Heart right ventricle (tissue), 16 donors: ENCODE measurements at regions of chr10 and their contacts with region 1.

Region 1: DNA sequence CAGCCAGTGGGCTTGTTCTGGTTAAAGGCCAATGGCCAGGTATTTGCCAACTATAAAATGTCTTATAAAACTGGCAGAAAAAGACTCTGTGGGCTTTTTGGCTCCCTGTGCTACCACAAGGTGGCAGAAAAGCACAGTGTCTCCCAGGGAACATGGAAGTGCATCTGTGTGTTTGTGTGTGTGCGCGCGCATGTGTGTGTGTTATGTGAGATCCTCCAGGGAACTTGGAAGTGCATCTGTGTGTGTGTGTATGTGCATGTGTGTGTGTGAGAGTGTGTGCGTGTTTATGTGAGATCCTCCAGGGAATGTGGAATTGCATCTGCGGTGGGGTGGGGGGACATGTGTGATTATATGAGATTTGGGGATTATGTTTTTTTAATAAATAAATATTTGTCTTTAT is 30.2 kb upstream of the ABI1 start:
- DNase-seq: no peak
- ATAC-seq: no peak
- H3K4me3 ChIP-seq: no peak overlapping the region
- H3K27ac ChIP-seq: no peak overlapping the region
- H3K4me1 ChIP-seq: no peaks in the 10 kb centered on the region
- H3K27me3 ChIP-seq: peaks cover 0 to 6% (median 0%) of the 10 kb centered on the region in 7 donors
- CTCF ChIP-seq: peak in 6 of 9 donors; percentile 19 to 50 (median 25)

Region 2: GRCh38 chr10:26422977-26423376 is 468.0 kb before region 1 on chr10:
- intact Hi-C with region 1: no loop called
- DNase-seq: no peak
- ATAC-seq: no peak
- H3K4me3 ChIP-seq: no peak overlapping the region
- H3K27ac ChIP-seq: no peak overlapping the region
- H3K4me1 ChIP-seq: no peaks in the 10 kb centered on the region
- H3K27me3 ChIP-seq: no peaks in the 10 kb centered on the region
- CTCF ChIP-seq: no peak

Region 3: GRCh38 chr10:26946102-26946811 is 55.3 kb after region 1 on chr10:
- intact Hi-C with region 1: no loop called
- DNase-seq: no peak
- ATAC-seq: no peak
- H3K4me3 ChIP-seq: no peak overlapping the region
- H3K27ac ChIP-seq: no peak overlapping the region
- H3K4me1 ChIP-seq: no peaks in the 10 kb centered on the region
- H3K27me3 ChIP-seq: peaks cover 0 to 43% (median 18%) of the 10 kb centered on the region in 7 donors
- CTCF ChIP-seq: no peak

Region 4: DNA sequence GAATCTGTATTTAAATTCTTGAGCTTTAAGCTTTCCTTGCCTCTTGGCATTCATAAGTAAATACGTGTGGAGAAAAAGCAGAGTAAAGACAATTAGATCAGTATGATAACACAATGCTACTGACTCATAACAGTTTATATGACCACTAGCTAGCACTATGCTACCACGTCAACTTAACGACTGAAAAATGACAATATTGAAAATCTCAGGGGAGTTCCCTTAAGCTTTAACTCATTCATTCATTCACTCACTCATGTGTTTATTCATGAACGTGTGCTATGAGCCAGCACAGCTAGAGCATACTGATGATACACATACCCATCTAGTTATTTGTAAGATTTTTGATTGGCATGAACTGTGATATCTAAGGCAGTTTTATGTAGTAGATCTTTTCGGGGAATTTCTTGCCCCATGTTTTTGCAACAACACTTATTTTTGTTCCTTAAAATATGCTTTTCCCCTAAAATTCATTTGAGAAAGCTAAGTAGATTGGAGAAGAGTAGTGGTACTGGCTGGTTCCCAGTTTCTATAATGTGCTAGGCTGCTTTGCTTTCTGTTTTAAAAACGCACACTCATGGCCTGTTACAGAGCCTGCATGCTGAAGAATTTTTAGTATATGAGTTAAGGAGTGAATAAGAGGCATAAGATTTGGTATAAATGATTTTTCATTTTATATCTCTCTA is 407.0 kb after region 1 on chr10:
- intact Hi-C with region 1: no loop called
- DNase-seq: no peak
- ATAC-seq: no peak
- H3K4me3 ChIP-seq: no peak overlapping the region
- H3K27ac ChIP-seq: peak overlapping the region in 1 of 10 donors; percentile 56
- H3K4me1 ChIP-seq: peaks cover 0 to 5% (median 0%) of the 10 kb centered on the region in 9 donors
- H3K27me3 ChIP-seq: no peaks in the 10 kb centered on the region
- CTCF ChIP-seq: no peak

Region 5: GRCh38 chr10:27360581-27361172 is 469.7 kb after region 1 on chr10:
- intact Hi-C with region 1: loop called in 2 of 10 experiments (anchors 5 to 10 kb)
- DNase-seq: peak; percentile 57 to 64
- ATAC-seq: peak in 5 of 8 donors; percentile 53 to 78 (median 71)
- H3K4me3 ChIP-seq: no peak overlapping the region
- H3K27ac ChIP-seq: no peak overlapping the region
- H3K4me1 ChIP-seq: no peaks in the 10 kb centered on the region
- H3K27me3 ChIP-seq: no peaks in the 10 kb centered on the region
- CTCF ChIP-seq: peak; percentile 31 to 82 (median 73)